CD4-positive, alpha-beta T cell (primary cell): ENCODE measurements at regions of chr14 and their contacts with region 1.

Region 1: GRCh38 chr14:63933110-63933509 is 80.3 kb downstream of the SYNE2 start:
- DNase-seq: peak in 3 of 14 experiments; percentile 22 to 62 (median 33)
- ATAC-seq: no peak
- H3K4me3 ChIP-seq: peak overlapping the region; percentile 40
- H3K4me3 Mint-ChIP-seq: peak overlapping the region; percentile 20
- H3K27ac ChIP-seq: peak overlapping the region in 1 of 2 donors; percentile 38
- H3K27ac Mint-ChIP-seq: peak overlapping the region; percentile 35
- H3K4me1 ChIP-seq: peaks cover 28% of the 10 kb centered on the region
- H3K4me1 Mint-ChIP-seq: peaks cover 23% of the 10 kb centered on the region
- H3K27me3 ChIP-seq: no peaks in the 10 kb centered on the region
- H3K27me3 Mint-ChIP-seq: no peaks in the 10 kb centered on the region
- CTCF ChIP-seq: no peak

Region 2: DNA sequence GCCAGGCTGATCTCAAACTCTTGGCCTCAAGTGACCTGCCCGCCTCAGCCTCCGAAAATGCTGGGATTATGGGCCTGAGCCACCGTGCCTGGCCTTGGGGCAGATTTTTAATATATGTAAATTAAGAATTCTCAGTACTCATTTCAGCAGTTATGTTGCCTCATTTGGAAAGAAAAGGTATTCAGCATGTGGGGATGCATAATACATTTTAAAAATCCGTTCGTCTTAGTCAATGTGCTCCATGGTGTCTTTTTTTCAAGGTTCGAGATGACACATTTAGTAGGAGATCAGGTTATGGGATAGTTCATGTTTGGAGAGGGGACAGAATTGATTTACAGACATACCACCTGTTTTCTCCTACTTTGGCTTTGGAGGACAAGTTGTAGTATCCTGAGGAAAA is 70.1 kb before region 1 on chr14:
- CTCF ChIA-PET with region 1: no interaction called
- POLR2A ChIA-PET with region 1: interaction called, 11 read pairs
- intact Hi-C with region 1: no loop called
- DNase-seq: no peak
- ATAC-seq: no peak
- H3K4me3 ChIP-seq: no peak overlapping the region
- H3K4me3 Mint-ChIP-seq: no peak overlapping the region
- H3K27ac ChIP-seq: peak overlapping the region; percentile 91 to 95
- H3K27ac Mint-ChIP-seq: peak overlapping the region; percentile 92
- H3K4me1 ChIP-seq: peaks cover 68% of the 10 kb centered on the region
- H3K4me1 Mint-ChIP-seq: peaks cover 61% of the 10 kb centered on the region
- H3K27me3 ChIP-seq: no peaks in the 10 kb centered on the region
- H3K27me3 Mint-ChIP-seq: no peaks in the 10 kb centered on the region
- CTCF ChIP-seq: no peak

Region 3: GRCh38 chr14:65756880-65757279 is 1823.8 kb after region 1 on chr14:
- CTCF ChIA-PET with region 1: no interaction called
- POLR2A ChIA-PET with region 1: no interaction called
- intact Hi-C with region 1: no loop called
- DNase-seq: no peak
- ATAC-seq: no peak
- H3K4me3 ChIP-seq: no peak overlapping the region
- H3K4me3 Mint-ChIP-seq: no peak overlapping the region
- H3K27ac ChIP-seq: no peak overlapping the region
- H3K27ac Mint-ChIP-seq: no peak overlapping the region
- H3K4me1 ChIP-seq: no peaks in the 10 kb centered on the region
- H3K4me1 Mint-ChIP-seq: no peaks in the 10 kb centered on the region
- H3K27me3 ChIP-seq: no peaks in the 10 kb centered on the region
- H3K27me3 Mint-ChIP-seq: no peaks in the 10 kb centered on the region
- CTCF ChIP-seq: no peak